ENCODE measurements at regions of chr17 and their contacts with region 1.

Region 1: GRCh38 chr17:42577532-42578281 is at the start of gene PSMC3IP:
- DNase-seq: peak; percentile 97
- H3K4me3 Mint-ChIP-seq: peak within 1 kb of the TSS; percentile 92
- H3K27ac Mint-ChIP-seq: peak within 1 kb of the TSS; percentile 89
- H3K4me1 Mint-ChIP-seq: peaks cover 50% of the 10 kb centered on the region
- H3K27me3 Mint-ChIP-seq: no peaks in the 10 kb centered on the region

Region 2: DNA sequence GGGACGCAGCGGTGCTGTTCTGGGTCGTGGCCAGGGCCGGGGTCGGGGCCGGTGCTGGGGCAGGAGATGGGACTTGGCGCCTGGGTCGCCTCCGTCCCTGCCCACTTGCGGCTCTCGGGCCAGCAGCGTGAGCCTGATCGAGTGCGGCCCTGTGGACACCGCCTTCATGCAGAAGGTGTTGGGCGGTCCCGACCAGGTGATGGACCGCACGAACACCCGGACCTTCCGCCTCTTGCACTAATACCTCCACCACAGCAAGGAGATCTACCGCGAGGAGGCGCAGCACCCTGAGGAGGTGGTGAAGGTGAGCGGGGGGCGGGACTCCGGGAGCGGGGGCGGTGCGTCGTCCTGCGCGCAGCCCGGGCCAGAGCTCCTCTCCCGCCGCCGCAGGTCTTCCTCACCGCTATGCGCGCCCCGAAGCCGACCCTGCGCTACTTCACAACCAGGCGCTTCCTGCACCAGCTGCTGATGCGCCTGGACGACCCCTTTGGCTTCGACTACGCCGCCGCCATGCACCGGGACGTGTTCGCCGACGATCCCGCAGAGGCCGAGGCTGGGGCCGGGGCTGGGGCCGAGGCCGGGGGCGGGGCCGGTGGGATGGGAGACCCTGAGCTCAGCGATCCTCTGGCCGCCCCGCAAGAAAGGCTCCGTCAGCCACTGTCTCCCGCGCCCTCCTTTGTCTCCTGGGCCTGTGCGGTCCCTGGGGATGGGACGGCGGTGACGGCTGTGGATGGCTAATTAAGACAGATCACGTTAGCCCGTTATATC is 29.5 kb before region 1 on chr17:
- CTCF ChIA-PET with region 1: interaction called, 11 read pairs
- DNase-seq: peak; percentile 88
- H3K4me3 Mint-ChIP-seq: peak overlapping the region; percentile 10
- H3K27ac Mint-ChIP-seq: peak overlapping the region; percentile 64
- H3K4me1 Mint-ChIP-seq: peaks cover 21% of the 10 kb centered on the region
- H3K27me3 Mint-ChIP-seq: no peaks in the 10 kb centered on the region

Region 3: DNA sequence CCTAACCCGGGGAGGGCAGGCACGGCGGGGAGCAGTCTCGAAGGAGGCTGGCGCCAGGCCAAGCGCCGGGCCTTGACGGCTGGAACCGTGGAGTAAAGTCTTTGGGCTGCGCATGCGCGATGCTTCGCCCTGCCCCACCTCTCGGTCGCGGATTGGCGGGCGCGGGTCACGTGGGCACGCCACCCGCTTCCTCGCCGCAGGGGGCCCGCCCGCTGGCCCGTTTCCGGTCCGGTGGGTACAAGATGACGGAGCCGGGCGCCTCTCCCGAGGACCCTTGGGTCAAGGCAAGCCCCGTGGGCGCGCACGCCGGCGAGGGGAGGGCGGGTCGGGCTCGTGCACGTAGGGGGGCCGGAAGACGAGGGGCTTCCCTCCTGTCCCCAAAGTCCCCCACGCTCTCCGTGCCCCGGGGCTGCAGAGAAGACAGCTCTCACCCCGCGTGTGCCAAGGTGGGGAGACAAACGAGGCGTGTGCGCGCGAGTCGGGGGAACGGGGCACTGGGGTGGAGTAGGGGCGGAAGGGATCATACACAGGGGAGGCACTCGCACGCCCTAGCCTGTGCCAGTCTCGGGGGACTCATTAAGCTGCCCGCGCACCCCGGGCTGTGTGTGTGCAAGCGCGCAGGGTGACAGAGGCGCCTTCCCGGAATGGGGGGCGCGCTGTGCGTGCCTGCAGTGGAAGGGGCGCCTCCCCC is 10.7 kb before region 1 on chr17 and contains the start of gene MLX:
- CTCF ChIA-PET with region 1: interaction called, 20 read pairs
- DNase-seq: peak; percentile 94
- H3K4me3 Mint-ChIP-seq: peak within 1 kb of the TSS; percentile 93
- H3K27ac Mint-ChIP-seq: peak within 1 kb of the TSS; percentile 95
- H3K4me1 Mint-ChIP-seq: peaks cover 61% of the 10 kb centered on the region
- H3K27me3 Mint-ChIP-seq: peaks cover 6% of the 10 kb centered on the region

Region 4: GRCh38 chr17:42609182-42609813 is 31.6 kb after region 1 on chr17 and contains the starts of genes RETREG3 and TUBG1:
- CTCF ChIA-PET with region 1: interaction called, 26 read pairs
- DNase-seq: peak; percentile 99
- H3K4me3 Mint-ChIP-seq: peak within 1 kb of the TSS; percentile 99
- H3K27ac Mint-ChIP-seq: peak within 1 kb of the TSS; percentile 97
- H3K4me1 Mint-ChIP-seq: peaks cover 46% of the 10 kb centered on the region
- H3K27me3 Mint-ChIP-seq: peaks cover 5% of the 10 kb centered on the region

Region 5: GRCh38 chr17:42623732-42624596 is 46.3 kb after region 1 on chr17:
- CTCF ChIA-PET with region 1: no interaction called
- DNase-seq: no peak
- H3K4me3 Mint-ChIP-seq: no peak overlapping the region
- H3K27ac Mint-ChIP-seq: no peak overlapping the region
- H3K4me1 Mint-ChIP-seq: no peaks in the 10 kb centered on the region
- H3K27me3 Mint-ChIP-seq: peaks cover 6% of the 10 kb centered on the region

Region 6: DNA sequence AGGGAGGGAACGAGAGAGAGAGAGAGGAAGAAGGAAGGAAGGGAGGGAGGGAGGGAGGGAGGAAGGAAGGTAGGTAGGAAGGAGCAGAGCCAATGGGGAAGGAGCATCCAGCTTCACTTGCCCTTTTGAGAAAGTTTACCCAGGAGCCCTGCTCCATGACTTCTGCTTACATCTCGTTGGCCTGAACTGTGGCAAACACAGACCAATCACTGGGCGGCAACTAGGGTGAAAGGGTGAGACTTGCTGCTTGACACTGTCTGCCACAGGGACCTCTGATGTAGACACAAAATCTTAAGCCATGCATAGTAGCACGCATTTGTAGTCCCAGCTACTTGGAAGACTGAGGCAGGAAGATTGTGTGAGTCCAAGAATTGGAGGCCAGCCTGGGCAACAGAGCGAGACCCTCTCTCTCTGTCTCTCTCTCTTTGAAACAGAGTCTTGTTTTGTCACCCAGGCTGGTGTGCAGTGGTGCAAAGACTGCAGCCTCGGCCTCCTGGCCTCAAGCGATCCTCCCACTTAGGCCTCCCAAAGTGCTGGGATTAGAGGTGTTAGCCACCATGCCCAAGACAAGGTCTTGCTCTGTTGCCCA is 61.9 kb after region 1 on chr17:
- CTCF ChIA-PET with region 1: no interaction called
- DNase-seq: no peak
- H3K4me3 Mint-ChIP-seq: no peak overlapping the region
- H3K27ac Mint-ChIP-seq: no peak overlapping the region
- H3K4me1 Mint-ChIP-seq: no peaks in the 10 kb centered on the region
- H3K27me3 Mint-ChIP-seq: peaks cover 37% of the 10 kb centered on the region

Region 7: DNA sequence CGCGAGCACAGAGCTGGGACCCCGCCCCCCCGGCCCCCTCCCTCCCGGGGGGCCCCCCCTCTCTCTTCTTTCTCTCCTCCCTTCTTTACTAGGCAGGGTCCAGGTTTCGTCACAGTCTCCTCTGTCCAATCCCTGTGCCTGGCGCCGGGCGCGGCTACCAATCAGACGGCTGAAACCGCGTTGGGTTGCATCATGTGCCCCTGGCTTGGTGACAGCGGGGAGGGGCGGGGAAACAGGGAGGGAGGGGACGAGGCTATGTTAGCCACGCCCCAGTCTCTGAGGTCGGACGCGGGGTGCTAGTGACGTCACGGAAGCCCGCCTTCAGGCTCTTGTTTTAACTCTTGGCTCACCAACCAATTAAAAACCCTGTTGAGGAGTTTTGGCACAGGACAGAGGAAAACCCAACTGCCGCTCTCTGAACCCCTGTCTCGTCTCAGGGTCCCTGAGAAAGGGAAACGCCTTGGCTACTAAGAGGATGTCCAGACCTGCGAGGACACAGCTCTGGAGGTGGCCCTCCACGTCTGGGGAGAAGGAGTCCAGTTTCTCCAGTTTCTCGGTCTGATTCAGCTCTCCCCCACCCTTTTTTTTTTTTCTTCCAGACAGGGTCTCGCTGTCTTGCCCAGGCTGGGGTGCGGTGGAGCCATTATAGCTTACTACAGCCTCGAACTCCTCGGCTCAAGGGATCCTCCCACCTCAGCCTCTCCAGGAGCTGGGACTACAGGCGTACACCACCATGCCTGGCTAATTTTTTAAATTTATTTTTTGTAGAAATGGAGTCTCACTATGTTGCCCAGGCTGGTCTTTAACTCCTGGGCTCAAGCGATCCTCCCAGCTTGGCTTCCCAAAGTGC is 99.5 kb after region 1 on chr17:
- CTCF ChIA-PET with region 1: interaction called, 61 read pairs
- DNase-seq: peak; percentile 100
- H3K4me3 Mint-ChIP-seq: peak overlapping the region; percentile 90
- H3K27ac Mint-ChIP-seq: peak overlapping the region; percentile 86
- H3K4me1 Mint-ChIP-seq: peaks cover 60% of the 10 kb centered on the region
- H3K27me3 Mint-ChIP-seq: peaks cover 75% of the 10 kb centered on the region

Region 8: GRCh38 chr17:42760652-42761581 is 183.2 kb after region 1 on chr17 and contains the start of gene RAMP2:
- CTCF ChIA-PET with region 1: interaction called, 77 read pairs
- DNase-seq: peak; percentile 38
- H3K4me3 Mint-ChIP-seq: peak within 1 kb of the TSS; percentile 41
- H3K27ac Mint-ChIP-seq: no peak within 1 kb of the TSS
- H3K4me1 Mint-ChIP-seq: peaks cover 12% of the 10 kb centered on the region
- H3K27me3 Mint-ChIP-seq: peaks cover 89% of the 10 kb centered on the region